ENCODE measurements at regions of chr11 and their contacts with region 1.

Region 1: DNA sequence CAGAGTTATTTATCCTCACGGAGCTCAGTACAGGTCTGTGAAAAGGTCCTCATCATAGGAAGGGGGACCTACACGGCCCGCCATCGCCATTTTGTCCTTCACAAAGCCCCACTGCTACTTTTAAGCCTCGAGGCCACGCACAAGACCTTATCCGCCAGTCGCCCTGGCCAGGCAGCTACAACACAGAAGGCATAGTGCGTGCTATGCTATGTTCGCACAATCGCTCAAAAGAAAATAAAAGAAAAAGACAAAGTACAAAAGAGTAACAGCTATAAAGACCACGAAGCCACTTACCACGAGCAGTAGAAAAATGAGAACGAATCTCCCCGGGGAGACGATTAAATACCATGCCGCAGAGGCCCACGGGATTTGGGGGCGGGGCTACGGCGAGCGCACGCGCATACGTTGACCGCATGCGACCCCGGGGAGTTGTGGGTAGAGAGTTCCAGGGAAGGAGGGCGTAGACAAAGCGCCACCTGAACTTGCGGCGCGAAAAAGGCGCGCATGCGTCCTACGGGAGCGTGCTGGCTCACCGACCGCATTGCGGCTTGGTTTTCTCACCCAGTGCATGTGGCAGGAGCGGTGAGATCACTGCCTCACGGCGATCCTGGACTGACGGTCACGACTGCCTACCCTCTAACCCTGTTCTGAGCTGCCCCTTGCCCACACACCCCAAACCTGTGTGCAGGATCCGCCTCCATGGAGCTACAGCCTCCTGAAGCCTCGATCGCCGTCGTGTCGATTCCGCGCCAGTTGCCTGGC is 16.4 kb upstream of the WDR74 start:
- DNase-seq: peak; percentile 96 to 100 (median 98)
- ATAC-seq: peak; percentile 91
- H3K4me3 ChIP-seq: peak overlapping the region; percentile 82 to 89
- H3K4me3 Mint-ChIP-seq: peak overlapping the region; percentile 96
- H3K27ac ChIP-seq: peak overlapping the region; percentile 76 to 84
- H3K27ac Mint-ChIP-seq: peak overlapping the region; percentile 91
- H3K4me1 ChIP-seq: peaks cover 36% of the 10 kb centered on the region
- H3K4me1 Mint-ChIP-seq: peaks cover 56% of the 10 kb centered on the region
- H3K27me3 ChIP-seq: no peaks in the 10 kb centered on the region
- H3K27me3 Mint-ChIP-seq: no peaks in the 10 kb centered on the region
- CTCF ChIP-seq: no peak

Region 2: GRCh38 chr11:62753736-62754603 is 101.8 kb before region 1 on chr11 and contains the start of gene ZBTB3:
- CTCF ChIA-PET with region 1: no interaction called
- POLR2A ChIA-PET with region 1: interaction called, 25 read pairs
- intact Hi-C with region 1: no loop called
- DNase-seq: peak; percentile 93 to 100 (median 96)
- ATAC-seq: peak; percentile 93
- H3K4me3 ChIP-seq: peak within 1 kb of the TSS; percentile 72 to 88
- H3K4me3 Mint-ChIP-seq: peak within 1 kb of the TSS; percentile 99
- H3K27ac ChIP-seq: peak within 1 kb of the TSS; percentile 64 to 91
- H3K27ac Mint-ChIP-seq: peak within 1 kb of the TSS; percentile 98
- H3K4me1 ChIP-seq: peaks cover 28% of the 10 kb centered on the region
- H3K4me1 Mint-ChIP-seq: peaks cover 32% of the 10 kb centered on the region
- H3K27me3 ChIP-seq: no peaks in the 10 kb centered on the region
- H3K27me3 Mint-ChIP-seq: no peaks in the 10 kb centered on the region
- CTCF ChIP-seq: no peak
- total RNA-seq, gene ZBTB3: 3.7 to 4.8 TPM

Region 3: GRCh38 chr11:62771144-62772021 is 84.4 kb before region 1 on chr11 and contains the start of gene TAF6L:
- CTCF ChIA-PET with region 1: interaction called, 3 read pairs
- POLR2A ChIA-PET with region 1: interaction called, 10 read pairs
- intact Hi-C with region 1: no loop called
- DNase-seq: peak; percentile 74 to 93 (median 87)
- ATAC-seq: peak; percentile 83
- H3K4me3 ChIP-seq: peak within 1 kb of the TSS; percentile 66 to 78
- H3K4me3 Mint-ChIP-seq: peak within 1 kb of the TSS; percentile 91
- H3K27ac ChIP-seq: peak within 1 kb of the TSS; percentile 64 to 83
- H3K27ac Mint-ChIP-seq: peak within 1 kb of the TSS; percentile 94
- H3K4me1 ChIP-seq: peaks cover 22% of the 10 kb centered on the region
- H3K4me1 Mint-ChIP-seq: peaks cover 27% of the 10 kb centered on the region
- H3K27me3 ChIP-seq: no peaks in the 10 kb centered on the region
- H3K27me3 Mint-ChIP-seq: no peaks in the 10 kb centered on the region
- CTCF ChIP-seq: no peak
- total RNA-seq, gene TAF6L: 10.3 to 13.2 TPM

Region 4: GRCh38 chr11:62805076-62805892 is 50.5 kb before region 1 on chr11 and contains the start of gene NXF1:
- CTCF ChIA-PET with region 1: interaction called, 4 read pairs
- POLR2A ChIA-PET with region 1: interaction called, 16 read pairs
- intact Hi-C with region 1: loop called in 1 of 2 experiments (anchors 1 kb)
- DNase-seq: peak; percentile 92 to 99 (median 96)
- ATAC-seq: peak; percentile 86
- H3K4me3 ChIP-seq: peak within 1 kb of the TSS; percentile 74 to 88
- H3K4me3 Mint-ChIP-seq: peak within 1 kb of the TSS; percentile 100
- H3K27ac ChIP-seq: peak within 1 kb of the TSS; percentile 78 to 95
- H3K27ac Mint-ChIP-seq: peak within 1 kb of the TSS; percentile 99
- H3K4me1 ChIP-seq: peaks cover 20% of the 10 kb centered on the region
- H3K4me1 Mint-ChIP-seq: peaks cover 37% of the 10 kb centered on the region
- H3K27me3 ChIP-seq: no peaks in the 10 kb centered on the region
- H3K27me3 Mint-ChIP-seq: no peaks in the 10 kb centered on the region
- CTCF ChIP-seq: no peak
- total RNA-seq, gene NXF1: 356 TPM